GM10248 (cell line): ENCODE measurements at regions of chr4 and their contacts with region 1.

Region 1: DNA sequence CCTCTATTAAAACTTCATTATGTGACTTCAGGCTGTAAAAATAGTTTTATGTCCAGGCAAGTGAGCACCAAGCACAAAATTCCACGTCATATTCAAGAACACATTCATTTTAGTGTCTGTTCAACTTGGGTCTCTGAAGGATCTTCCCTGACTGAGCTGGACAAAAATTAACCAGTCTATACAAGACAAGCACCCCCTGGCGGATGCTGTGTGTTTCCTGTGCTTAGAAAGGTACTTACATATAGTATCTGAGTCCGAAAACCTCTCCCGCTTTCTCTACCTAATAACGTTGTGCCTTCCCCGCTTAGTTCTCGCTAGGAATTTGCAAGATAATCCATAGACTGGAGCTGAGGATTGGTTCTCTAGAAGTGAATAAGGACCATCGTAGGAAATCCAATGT is 2214.5 kb upstream of the TENM3 start:
- DNase-seq: no peak
- CTCF ChIP-seq: peak; percentile 27

Region 2: GRCh38 chr4:179867300-179867878 is 161.3 kb before region 1 on chr4:
- CTCF ChIA-PET with region 1: interaction called, 10 read pairs
- POLR2A ChIA-PET with region 1: no interaction called
- DNase-seq: peak; percentile 56
- CTCF ChIP-seq: peak; percentile 81

Region 3: GRCh38 chr4:179919587-179919986 is 109.1 kb before region 1 on chr4:
- CTCF ChIA-PET with region 1: no interaction called
- POLR2A ChIA-PET with region 1: no interaction called
- DNase-seq: no peak
- CTCF ChIP-seq: no peak

Region 4: DNA sequence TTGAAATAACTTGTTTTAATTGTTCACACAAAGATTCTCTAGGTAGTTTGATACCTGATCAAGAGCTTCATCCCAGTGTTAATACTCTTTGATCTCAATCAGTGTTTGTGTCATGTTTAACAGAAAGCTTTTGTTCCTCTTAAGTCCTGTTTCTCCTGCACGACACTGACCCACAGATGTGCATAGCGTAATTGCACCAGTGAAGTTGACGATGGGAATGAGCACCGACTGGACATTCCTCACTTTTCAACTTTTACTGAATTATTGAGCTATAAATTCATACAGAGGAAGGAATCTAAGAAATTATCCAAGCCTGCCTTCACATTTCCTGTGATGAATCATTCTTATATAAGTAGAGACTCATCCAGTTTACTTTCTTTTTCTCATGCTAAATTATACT is 1335.8 kb after region 1 on chr4:
- CTCF ChIA-PET with region 1: no interaction called
- POLR2A ChIA-PET with region 1: no interaction called
- DNase-seq: no peak
- CTCF ChIP-seq: no peak